GM10248 (cell line): ENCODE measurements at regions of chr17 and their contacts with region 1.

Region 1: DNA sequence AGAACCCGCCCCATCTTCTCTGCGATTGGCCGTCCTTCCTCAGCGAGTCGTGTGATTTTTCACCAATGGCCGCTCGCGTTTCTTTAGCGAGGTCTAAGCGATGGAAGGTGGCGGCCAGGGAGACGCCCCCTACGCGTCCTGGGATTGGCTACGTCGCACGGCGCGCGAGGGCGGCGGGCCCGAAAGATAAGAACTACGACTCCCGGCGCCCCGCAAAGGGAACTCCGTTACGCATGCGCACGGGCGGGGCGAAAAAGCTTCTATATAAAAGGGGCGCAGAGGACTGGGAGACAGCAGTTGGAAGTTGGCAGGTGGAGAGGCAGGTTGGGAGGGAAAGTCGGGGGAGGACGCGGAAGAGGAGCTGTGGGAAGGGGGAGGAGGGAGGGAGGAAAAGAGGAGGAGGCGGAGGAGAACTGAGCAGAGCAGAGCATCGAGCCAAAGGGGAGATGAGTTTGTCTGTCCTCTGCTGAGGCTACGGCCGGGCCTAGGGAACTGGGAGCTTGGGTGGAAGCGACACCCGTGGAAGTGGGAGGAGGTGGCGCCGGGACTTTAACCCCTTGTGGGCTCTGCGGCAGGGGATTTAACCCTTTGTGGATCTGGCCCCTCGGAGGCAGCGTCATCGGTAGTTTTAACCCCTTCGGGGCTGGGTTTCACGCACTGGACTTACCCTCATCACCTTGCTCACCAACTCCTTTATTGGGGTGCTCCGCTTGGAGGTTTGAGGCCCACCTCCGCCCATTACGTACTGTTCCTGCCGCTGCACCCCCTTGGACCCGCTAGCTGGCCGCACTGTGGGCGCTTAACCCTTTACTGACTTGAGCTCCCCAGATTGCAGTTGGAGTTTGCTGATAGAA is at the start of gene HEXIM1:
- DNase-seq: peak; percentile 96
- CTCF ChIP-seq: no peak

Region 2: DNA sequence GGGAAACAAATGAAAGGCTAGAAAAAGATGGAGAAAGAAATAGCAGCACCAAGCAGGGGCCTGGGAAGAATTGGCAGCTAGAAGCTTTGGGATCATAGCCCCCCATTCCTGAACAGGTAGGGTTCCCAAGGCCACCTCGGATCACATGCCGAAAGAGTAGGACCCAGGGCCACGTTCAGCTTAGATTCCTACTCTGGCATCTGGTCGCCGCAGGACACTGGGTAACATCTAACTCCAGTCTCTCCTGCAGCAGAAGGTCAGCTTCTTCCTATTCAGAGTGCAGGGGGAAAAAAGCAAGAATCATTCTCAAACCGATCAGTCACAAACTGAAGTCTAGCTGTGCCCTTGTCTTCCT is 365.9 kb before region 1 on chr17:
- CTCF ChIA-PET with region 1: interaction called, 5 read pairs
- POLR2A ChIA-PET with region 1: interaction called, 11 read pairs
- DNase-seq: no peak
- CTCF ChIP-seq: no peak

Region 3: GRCh38 chr17:45038728-45039634 is 109.4 kb before region 1 on chr17:
- CTCF ChIA-PET with region 1: no interaction called
- POLR2A ChIA-PET with region 1: interaction called, 11 read pairs
- DNase-seq: no peak
- CTCF ChIP-seq: no peak

Region 4: DNA sequence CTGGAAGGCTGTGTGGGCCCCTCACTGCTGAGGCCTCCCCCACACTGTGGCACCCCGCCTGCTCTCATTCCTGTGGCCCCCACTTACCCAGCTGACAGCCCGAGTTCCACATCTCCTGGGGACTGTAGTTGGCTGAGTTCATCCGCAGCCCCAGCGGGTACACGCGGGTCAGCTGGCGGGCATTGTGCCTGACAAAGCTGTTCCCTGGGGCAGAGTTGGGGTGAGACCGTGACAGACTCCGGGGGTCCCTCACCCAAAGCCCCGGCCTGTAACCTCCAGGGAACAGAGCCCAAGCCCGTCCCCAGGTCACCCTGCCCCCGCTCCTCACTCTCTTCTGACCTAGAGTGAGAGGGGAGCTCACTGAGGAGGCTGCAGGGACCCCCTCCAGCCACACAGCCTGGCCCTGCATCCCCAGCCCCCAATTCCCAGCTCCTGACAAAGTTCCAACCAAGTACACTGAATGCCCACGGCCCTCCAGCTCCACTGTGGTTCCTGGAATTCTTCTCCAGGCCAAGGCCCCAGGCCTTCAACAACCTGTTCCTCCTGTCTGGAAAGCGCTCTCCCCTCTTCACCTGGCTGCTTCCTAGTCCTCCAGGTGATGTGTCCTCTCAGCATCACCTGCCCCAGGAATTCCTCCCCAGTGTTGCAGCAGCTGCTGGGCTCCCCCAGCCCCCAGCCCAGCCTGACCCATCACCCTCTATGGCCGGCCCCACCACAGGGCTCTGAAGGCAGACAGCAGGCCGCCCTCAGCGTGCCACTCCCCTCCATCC is 34.1 kb before region 1 on chr17:
- CTCF ChIA-PET with region 1: no interaction called
- POLR2A ChIA-PET with region 1: no interaction called
- DNase-seq: no peak
- CTCF ChIP-seq: no peak

Region 5: DNA sequence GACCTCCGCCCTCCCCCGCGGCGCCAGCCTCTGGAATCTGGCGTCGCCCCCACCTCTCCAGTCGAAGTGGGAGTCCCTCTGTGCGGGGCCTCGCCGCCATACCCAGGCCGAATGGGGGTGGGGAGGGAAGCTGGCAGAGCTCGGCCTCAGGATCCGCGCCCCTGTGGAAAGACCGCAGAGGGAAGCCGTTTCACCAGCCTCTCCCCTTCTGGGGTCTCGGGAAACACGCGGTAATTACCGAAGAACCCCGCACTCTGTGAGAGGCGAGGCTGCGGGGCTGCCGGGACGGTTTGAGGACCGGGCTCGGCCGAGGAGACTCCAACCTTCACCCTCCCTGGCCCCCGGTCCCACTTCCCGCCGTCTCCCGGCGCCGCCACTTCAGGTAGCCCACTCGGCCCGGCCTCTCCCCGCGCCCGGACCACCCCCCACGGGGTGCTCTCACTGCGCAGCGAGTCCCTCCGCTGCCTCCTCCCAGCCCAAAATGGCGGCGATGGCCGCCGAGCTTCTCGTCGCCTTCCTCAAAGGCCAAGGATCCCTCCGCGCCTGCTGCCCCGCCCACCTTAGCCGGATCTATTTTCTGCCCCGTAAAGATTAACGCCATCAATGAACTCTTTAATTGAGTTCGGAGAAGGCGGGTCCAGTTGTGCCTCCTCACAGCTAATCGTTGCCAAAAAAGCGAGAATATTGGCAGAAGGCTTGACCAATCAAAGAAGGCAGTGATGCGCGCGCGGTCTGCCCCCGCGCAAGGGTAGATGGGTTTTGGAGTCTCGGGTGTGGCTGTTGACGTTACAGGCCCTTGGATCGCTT is 12.8 kb after region 1 on chr17:
- CTCF ChIA-PET with region 1: interaction called, 131 read pairs
- POLR2A ChIA-PET with region 1: interaction called, 332 read pairs
- DNase-seq: peak; percentile 97
- CTCF ChIP-seq: peak; percentile 23

Region 6: GRCh38 chr17:45190503-45191255 is 42.3 kb after region 1 on chr17:
- CTCF ChIA-PET with region 1: interaction called, 5 read pairs
- POLR2A ChIA-PET with region 1: interaction called, 11 read pairs
- DNase-seq: no peak
- CTCF ChIP-seq: no peak

Region 7: GRCh38 chr17:45218895-45219661 is 70.7 kb after region 1 on chr17:
- CTCF ChIA-PET with region 1: interaction called, 8 read pairs
- POLR2A ChIA-PET with region 1: interaction called, 11 read pairs
- DNase-seq: peak; percentile 74
- CTCF ChIP-seq: peak; percentile 94

Region 8: DNA sequence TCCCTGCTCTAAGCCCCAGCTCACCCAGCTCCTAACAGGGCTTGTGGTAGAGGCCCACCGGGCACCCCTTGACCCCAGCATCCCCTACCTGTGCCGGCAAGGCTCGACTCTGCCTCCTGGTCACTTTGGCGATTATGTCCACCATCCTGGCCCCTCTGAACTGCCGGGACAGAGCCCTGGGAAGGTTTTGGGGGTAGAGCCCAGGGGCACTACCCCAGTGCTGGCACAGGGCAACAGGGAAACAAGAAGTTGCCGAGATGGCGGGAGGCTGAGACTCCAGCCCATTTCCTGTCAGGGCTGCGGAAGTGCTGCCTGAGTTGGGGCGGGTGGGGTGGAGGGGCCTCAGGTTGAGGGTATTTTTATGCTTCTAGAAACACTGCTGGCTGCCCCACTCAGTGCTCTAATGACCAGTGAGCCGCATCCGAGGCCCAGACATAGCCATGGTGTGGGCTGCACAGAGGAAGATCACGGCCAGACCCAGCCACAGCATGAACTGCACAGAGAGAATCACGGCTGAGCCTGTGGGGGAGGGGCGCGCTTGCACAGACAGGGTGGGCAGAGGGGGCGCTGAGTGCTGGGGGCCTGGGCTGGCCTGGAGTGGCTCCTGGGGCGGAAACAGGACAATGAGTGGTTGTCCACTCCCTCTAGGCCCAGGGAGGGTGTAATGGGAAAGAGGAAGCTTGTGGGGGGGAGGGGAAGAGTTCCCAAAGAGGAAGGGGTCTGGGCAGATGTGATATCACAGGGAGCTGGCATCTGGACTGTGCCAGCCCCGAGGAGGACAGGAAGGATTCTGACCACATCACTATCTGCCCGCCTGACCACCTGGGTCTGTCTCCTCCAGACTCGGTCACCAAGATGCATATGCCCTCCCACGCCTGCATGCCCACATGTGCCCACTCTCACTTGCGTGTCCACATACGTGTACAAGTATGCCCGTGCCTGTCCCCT is 262.0 kb after region 1 on chr17:
- CTCF ChIA-PET with region 1: no interaction called
- POLR2A ChIA-PET with region 1: interaction called, 10 read pairs
- DNase-seq: peak; percentile 84
- CTCF ChIP-seq: no peak